GM12878 (cell line): ENCODE measurements at regions of chr3 and their contacts with region 1.

Region 1: DNA sequence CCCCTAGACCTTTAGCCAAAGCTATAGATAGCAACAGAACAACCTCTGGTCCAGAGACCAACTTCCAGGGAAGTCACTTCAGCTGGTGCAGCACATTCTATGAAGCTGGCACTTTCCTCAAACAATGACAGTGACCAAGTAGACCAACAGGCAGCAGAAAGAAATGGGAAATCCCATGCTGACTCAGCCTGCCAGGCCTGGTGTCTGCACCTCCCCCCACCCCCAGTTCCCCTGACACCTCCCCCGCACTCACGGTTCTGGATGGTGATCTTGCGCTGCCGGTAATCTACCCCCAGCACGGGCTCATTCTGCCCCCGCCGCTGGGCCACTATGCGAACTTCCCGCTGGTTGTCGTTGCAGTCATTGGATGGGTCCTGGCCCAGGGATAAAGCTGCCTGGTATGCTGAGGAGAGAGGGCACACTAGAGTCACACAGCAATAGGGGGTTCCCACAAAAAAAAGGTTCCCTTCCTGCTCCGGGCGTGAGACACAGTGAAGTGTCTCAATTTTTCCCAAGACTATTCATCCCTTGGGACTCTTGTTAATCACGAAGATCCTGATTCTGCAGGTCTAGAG is 17.0 kb downstream of the ILDR1 start:
- DNase-seq: peak; percentile 74
- ATAC-seq: peak; percentile 78
- H3K4me3 ChIP-seq: peak overlapping the region; percentile 46; the same call in 1 of the 2 replicates
- H3K27ac ChIP-seq: peak overlapping the region; percentile 91
- H3K4me1 ChIP-seq: peaks cover 58% of the 10 kb centered on the region
- H3K27me3 ChIP-seq: no peaks in the 10 kb centered on the region
- CTCF ChIP-seq: 0 out of 6 replicates have a peak, but pooled peaks of 1 of the 3 experiments have one; percentile 3
- EP300 ChIP-seq: peak; percentile 11 to 65; a peak in 3 of 4 replicates
- POLR2A ChIP-seq: 0 out of 2 replicates have a peak, but pooled peaks have one; percentile 35
- RAD21 ChIP-seq: no peak

Region 2: DNA sequence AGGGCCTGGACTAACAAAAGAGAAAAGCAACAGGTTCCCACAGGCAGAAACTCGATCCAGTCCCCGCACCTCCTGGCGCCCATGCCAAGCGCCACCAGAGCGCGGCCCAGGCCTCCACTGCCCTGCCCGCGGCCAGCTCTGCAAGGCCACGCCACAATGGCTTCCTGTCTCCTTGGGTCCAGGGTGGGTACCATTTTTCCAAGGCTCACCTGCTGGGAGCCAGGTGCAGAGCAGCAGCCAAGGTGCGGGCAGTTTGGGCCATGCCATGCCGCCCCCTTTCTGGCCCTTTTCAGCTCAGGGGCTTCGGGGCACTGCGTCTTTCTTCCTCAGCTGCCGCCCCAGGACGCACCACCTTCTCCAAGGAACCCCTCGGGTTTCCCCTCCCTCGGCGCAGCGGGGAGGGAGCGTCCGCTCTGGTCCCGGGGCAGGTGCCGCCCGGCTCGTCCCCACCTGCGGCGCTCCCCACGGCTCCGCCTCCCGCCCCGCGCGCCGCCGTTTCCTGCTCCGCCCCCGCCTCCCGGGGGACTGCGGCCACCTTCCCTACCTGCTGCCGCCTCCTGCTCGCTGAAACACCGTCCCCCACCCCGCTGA is 16.8 kb after region 1 on chr3 and contains the start of gene ILDR1:
- CTCF ChIA-PET with region 1: interaction called, 23 read pairs
- POLR2A ChIA-PET with region 1: interaction called, 120 read pairs
- RAD21 ChIA-PET with region 1: interaction called, 85 read pairs
- SMC1A ChIA-PET with region 1: interaction called, 454 read pairs
- in situ Hi-C with region 1: no loop called
- intact Hi-C with region 1: loop called (anchors 2 kb)
- DNase-seq: no peak
- ATAC-seq: peak; percentile 55
- H3K4me3 ChIP-seq: peak within 1 kb of the TSS; percentile 72
- H3K27ac ChIP-seq: peak within 1 kb of the TSS; percentile 65
- H3K4me1 ChIP-seq: peaks cover 49% of the 10 kb centered on the region
- H3K27me3 ChIP-seq: no peaks in the 10 kb centered on the region
- CTCF ChIP-seq: no peak
- EP300 ChIP-seq: no peak
- POLR2A ChIP-seq: peak; percentile 60; the same call in 1 of the 2 replicates
- RAD21 ChIP-seq: no peak
- polyA plus RNA-seq, gene ILDR1: 1.3 to 1.8 TPM

Region 3: GRCh38 chr3:122081543-122082247 is 76.6 kb after region 1 on chr3:
- CTCF ChIA-PET with region 1: interaction called, 11 read pairs
- POLR2A ChIA-PET with region 1: interaction called, 25 read pairs
- RAD21 ChIA-PET with region 1: interaction called, 93 read pairs
- SMC1A ChIA-PET with region 1: interaction called, 882 read pairs
- in situ Hi-C with region 1: loop called (anchors 5 kb)
- intact Hi-C with region 1: no loop called
- DNase-seq: no peak
- ATAC-seq: peak; percentile 57
- H3K4me3 ChIP-seq: peak overlapping the region; percentile 86; the same call in 1 of the 2 replicates
- H3K27ac ChIP-seq: peak overlapping the region; percentile 97
- H3K4me1 ChIP-seq: peaks cover 62% of the 10 kb centered on the region
- H3K27me3 ChIP-seq: no peaks in the 10 kb centered on the region
- CTCF ChIP-seq: no peak
- EP300 ChIP-seq: peak; percentile 62 to 89; a peak in 3 of 4 replicates
- POLR2A ChIP-seq: no peak
- RAD21 ChIP-seq: 0 out of 2 replicates have a peak, but pooled peaks have one; percentile 12

Region 4: GRCh38 chr3:122493296-122493695 is 488.2 kb after region 1 on chr3:
- CTCF ChIA-PET with region 1: no interaction called
- POLR2A ChIA-PET with region 1: no interaction called
- RAD21 ChIA-PET with region 1: no interaction called
- SMC1A ChIA-PET with region 1: no interaction called
- in situ Hi-C with region 1: no loop called
- intact Hi-C with region 1: no loop called
- DNase-seq: no peak
- ATAC-seq: no peak
- H3K4me3 ChIP-seq: no peak overlapping the region
- H3K27ac ChIP-seq: no peak overlapping the region
- H3K4me1 ChIP-seq: peaks cover 12% of the 10 kb centered on the region
- H3K27me3 ChIP-seq: no peaks in the 10 kb centered on the region
- CTCF ChIP-seq: no peak
- EP300 ChIP-seq: no peak
- POLR2A ChIP-seq: no peak
- RAD21 ChIP-seq: no peak